CD4-positive, alpha-beta memory T cell (primary cell): ENCODE measurements at regions of chr11 and their contacts with region 1.

Region 1: DNA sequence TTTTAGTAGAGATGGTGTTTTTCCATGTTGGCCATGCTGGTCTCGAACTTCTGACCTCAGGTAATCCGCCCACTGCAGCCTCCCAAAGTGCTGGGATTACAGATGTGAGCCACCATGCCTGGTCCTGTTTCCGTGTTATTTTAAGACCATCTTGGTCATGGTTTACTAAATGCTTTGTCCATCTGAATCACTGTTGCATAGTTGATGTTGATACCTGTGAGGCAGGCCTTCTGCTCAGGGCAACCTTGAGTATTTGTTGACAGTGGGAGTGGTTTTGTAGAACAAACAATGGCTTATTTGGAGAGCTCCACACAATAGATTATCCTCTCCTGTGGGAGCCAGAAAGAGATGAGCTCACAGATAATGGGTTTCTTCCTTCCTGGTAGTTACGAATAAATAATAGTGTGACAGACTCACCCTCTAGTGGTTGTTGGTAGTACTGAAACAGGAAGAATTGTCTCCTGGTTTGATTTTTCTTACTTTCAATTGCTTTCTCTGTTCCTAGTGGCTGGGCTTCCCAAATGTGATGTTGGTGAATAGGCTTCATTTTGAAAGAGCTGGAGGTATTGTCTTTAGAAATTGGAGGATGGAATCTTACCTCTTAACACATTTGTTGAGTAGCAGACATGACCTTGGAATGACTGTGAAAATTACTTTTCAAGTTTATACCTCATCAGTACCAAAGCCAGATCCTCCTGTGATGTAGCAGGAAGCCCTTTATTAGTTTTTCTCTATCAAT is 39.0 kb downstream of the CTNND1 start:
- DNase-seq: peak in 4 of 5 donors; percentile 57 to 65 (median 64)
- H3K4me3 ChIP-seq: no peak overlapping the region
- H3K4me3 Mint-ChIP-seq: peak overlapping the region in 6 of 8 donors; percentile 7 to 69 (median 22)
- H3K27ac ChIP-seq: peak overlapping the region; percentile 24
- H3K27ac Mint-ChIP-seq: peak overlapping the region; percentile 65 to 94 (median 89)
- H3K4me1 ChIP-seq: peaks cover 27% of the 10 kb centered on the region
- H3K4me1 Mint-ChIP-seq: peaks cover 10 to 29% (median 21%) of the 10 kb centered on the region in 4 donors
- H3K27me3 ChIP-seq: no peaks in the 10 kb centered on the region
- H3K27me3 Mint-ChIP-seq: no peaks in the 10 kb centered on the region

Region 2: DNA sequence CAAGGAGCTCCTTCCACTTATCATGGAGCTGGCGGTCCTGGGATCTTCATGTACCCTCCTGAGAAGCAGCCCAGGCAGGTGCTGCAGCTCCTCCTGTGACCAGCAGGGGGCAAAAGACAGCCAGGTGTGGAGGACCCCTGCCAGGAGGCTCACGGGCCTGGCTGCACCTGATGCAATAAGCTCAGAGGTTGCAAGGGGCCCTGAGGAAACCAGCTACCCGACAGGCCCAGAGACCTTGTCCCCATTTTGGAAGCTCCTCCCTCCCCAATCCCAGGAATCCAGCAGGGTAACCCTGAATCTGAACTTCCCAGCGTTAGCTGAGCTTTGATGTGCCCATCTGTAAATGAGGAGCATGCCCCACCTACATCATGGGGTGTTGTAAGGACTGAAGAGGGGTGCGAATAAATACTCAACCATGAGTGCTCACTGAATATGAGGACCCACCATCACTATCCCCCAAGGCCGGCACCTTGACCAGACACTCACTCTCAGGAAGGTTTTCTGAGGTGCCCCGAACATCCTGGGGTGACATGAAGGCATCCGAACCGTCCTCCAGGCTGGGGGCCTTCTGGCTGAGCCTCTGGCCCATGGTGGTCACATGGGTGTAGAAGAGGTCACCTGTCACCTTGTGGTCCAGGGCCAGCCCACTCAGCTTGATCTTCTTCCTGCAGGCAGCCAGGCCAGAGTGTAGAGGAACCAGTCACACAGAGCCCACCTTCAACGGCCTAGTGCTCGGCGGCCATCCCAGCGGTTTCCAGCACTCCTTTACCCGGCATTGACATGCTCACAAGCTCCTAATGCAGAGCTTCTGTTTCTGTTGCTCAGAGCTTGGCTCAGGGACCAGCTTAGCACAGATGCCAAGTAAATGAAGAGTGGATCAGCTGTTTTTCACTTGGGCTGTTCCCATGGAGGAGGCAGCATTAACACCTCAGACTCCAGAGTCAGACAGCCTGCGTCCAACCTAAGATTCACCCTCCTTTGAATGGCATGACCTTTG is 306.8 kb before region 1 on chr11:
- CTCF ChIA-PET with region 1: interaction called, 41 read pairs
- POLR2A ChIA-PET with region 1: no interaction called
- intact Hi-C with region 1: loop called (anchors 1 kb)
- DNase-seq: peak; percentile 64 to 74 (median 67)
- H3K4me3 ChIP-seq: no peak overlapping the region
- H3K4me3 Mint-ChIP-seq: no peak overlapping the region
- H3K27ac ChIP-seq: no peak overlapping the region
- H3K27ac Mint-ChIP-seq: no peak overlapping the region
- H3K4me1 ChIP-seq: no peaks in the 10 kb centered on the region
- H3K4me1 Mint-ChIP-seq: no peaks in the 10 kb centered on the region
- H3K27me3 ChIP-seq: no peaks in the 10 kb centered on the region
- H3K27me3 Mint-ChIP-seq: no peaks in the 10 kb centered on the region

Region 3: DNA sequence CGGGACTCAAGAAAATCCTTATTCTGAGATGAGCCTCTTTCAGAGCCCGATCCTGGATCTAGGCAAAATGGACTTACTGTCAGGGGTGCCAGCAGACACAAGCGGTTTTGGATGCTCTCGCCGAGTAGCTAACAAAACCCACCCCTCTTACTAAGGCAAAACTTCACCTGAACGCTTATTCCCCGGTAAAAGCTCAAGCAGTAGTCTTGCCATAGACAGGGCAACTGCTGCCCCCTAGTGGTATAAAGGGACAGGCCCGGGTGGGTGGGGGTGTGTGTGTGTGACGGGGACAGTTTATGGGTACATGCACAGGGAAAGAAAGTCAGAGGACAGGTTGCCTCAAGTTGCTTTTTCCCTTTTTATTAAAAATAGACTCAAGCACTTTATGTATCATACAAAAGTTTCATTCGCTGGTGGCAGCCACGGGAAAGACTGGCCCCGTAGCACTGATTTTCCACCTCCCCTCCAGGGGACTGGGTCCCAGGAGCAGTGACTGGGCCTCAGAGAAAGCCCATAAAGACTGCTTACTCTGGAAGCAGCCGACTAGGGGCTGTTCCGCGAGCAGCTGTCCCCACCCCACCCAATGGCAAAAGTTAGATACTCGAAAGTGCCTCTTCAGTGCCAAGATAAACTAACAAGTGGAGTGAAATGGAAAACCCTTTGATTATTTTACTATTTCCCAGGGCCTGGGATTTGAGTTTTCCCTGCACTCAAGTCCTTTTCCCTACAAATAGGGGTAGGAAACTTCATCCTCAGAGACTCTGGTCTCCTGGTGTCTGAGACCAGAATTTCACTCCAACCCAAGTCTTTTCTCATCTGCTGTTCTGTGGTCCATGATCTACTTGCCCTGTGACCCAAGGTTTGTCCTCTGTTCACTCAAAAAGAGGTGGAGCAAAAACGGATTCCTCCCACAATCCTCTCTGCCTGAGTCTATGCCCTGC is 155.6 kb before region 1 on chr11:
- CTCF ChIA-PET with region 1: interaction called, 49 read pairs
- POLR2A ChIA-PET with region 1: interaction called, 6 read pairs
- intact Hi-C with region 1: loop called (anchors 1 kb)
- DNase-seq: peak; percentile 82 to 89 (median 86)
- H3K4me3 ChIP-seq: no peak overlapping the region
- H3K4me3 Mint-ChIP-seq: peak overlapping the region in 1 of 8 donors; percentile 67
- H3K27ac ChIP-seq: no peak overlapping the region
- H3K27ac Mint-ChIP-seq: peak overlapping the region in 2 of 7 donors; percentile 62 to 69
- H3K4me1 ChIP-seq: peaks cover 17% of the 10 kb centered on the region
- H3K4me1 Mint-ChIP-seq: peaks cover 18 to 38% (median 28%) of the 10 kb centered on the region in 4 donors
- H3K27me3 ChIP-seq: peaks cover 37% of the 10 kb centered on the region
- H3K27me3 Mint-ChIP-seq: peaks cover 31 to 50% of the 10 kb centered on the region in 2 donors

Region 4: GRCh38 chr11:57667736-57668435 is 132.7 kb before region 1 on chr11 and contains the start of gene ZDHHC5:
- CTCF ChIA-PET with region 1: interaction called, 15 read pairs
- POLR2A ChIA-PET with region 1: interaction called, 5 read pairs
- intact Hi-C with region 1: loop called (anchors 1 kb)
- DNase-seq: peak; percentile 99 to 100 (median 100)
- H3K4me3 ChIP-seq: peak within 1 kb of the TSS; percentile 75 to 93
- H3K4me3 Mint-ChIP-seq: peak within 1 kb of the TSS; percentile 88 to 99 (median 96)
- H3K27ac ChIP-seq: peak within 1 kb of the TSS; percentile 91
- H3K27ac Mint-ChIP-seq: peak within 1 kb of the TSS; percentile 98 to 100 (median 99)
- H3K4me1 ChIP-seq: peaks cover 46% of the 10 kb centered on the region
- H3K4me1 Mint-ChIP-seq: peaks cover 33 to 67% (median 45%) of the 10 kb centered on the region in 4 donors
- H3K27me3 ChIP-seq: no peaks in the 10 kb centered on the region
- H3K27me3 Mint-ChIP-seq: peaks cover 0 to 5% of the 10 kb centered on the region in 2 donors
- total RNA-seq, gene ZDHHC5: 73.2 to 75.8 TPM

Region 5: GRCh38 chr11:57712256-57713150 is 88.1 kb before region 1 on chr11 and contains the start of gene TMX2:
- CTCF ChIA-PET with region 1: interaction called, 30 read pairs
- POLR2A ChIA-PET with region 1: interaction called, 6 read pairs
- intact Hi-C with region 1: loop called (anchors 1 kb)
- DNase-seq: peak; percentile 89 to 97 (median 94)
- H3K4me3 ChIP-seq: peak within 1 kb of the TSS; percentile 92 to 96
- H3K4me3 Mint-ChIP-seq: peak within 1 kb of the TSS; percentile 93 to 99 (median 98)
- H3K27ac ChIP-seq: peak within 1 kb of the TSS; percentile 96
- H3K27ac Mint-ChIP-seq: peak within 1 kb of the TSS; percentile 91 to 99 (median 98)
- H3K4me1 ChIP-seq: peaks cover 34% of the 10 kb centered on the region
- H3K4me1 Mint-ChIP-seq: peaks cover 30 to 64% (median 43%) of the 10 kb centered on the region in 4 donors
- H3K27me3 ChIP-seq: no peaks in the 10 kb centered on the region
- H3K27me3 Mint-ChIP-seq: no peaks in the 10 kb centered on the region
- total RNA-seq, gene TMX2: 63.6 to 67.1 TPM

Region 6: DNA sequence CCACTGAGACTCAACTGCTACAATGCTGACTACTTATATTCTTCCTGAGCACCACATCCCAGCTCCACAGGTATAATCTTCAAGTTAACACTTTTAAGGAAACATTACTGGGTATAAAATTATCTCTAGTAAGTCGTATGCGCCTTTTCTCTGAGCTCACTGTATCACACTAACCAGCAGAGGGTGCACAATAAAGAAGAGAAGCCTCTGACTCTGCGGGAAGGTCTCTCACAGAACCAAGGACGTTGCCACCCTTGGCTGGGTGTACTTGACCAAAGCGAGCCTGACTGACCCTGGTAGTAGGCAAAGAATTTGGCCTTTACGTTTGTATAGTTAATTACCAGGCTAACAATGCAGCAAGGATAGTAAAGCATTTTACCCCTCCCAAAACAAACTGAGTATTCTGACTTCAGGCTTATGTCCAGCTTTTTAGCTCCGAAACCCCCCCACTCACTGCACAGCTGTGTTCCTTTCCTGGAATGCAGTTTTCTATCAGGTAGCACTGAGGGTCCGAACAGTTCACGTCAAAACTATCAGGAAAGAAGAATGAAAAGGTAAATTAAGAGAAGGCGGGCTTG is 48.8 kb before region 1 on chr11 and contains the start of gene BTBD18:
- CTCF ChIA-PET with region 1: interaction called, 143 read pairs
- POLR2A ChIA-PET with region 1: interaction called, 14 read pairs
- intact Hi-C with region 1: loop called (anchors 1 kb)
- DNase-seq: peak in 2 of 5 donors; percentile 1 to 15
- H3K4me3 ChIP-seq: no peak within 1 kb of the TSS
- H3K4me3 Mint-ChIP-seq: no peak within 1 kb of the TSS
- H3K27ac ChIP-seq: no peak within 1 kb of the TSS
- H3K27ac Mint-ChIP-seq: peak within 1 kb of the TSS in 2 of 7 donors; percentile 19 to 80
- H3K4me1 ChIP-seq: no peaks in the 10 kb centered on the region
- H3K4me1 Mint-ChIP-seq: peaks cover 0 to 10% (median 8%) of the 10 kb centered on the region in 4 donors
- H3K27me3 ChIP-seq: no peaks in the 10 kb centered on the region
- H3K27me3 Mint-ChIP-seq: no peaks in the 10 kb centered on the region
- total RNA-seq, gene BTBD18: not detected

Region 7: DNA sequence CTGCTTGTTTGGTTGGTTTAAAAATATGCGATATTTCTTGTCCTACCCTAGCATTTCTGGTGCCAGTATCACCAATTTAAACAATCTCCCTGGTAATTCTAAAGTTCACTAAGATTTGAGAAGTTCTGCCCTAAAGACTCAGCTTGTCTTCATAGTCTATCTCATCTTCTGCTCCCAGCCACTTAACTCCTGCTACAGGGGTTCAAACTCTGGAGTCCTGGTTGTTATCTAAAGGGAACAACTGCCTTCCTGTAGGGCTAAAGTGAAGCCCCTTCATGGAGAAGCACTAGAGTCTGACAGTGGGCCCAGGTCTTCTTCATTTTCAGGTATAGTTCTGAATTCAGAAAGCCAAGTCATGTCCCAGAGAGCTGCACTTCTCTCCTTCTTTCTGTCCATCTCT is 34.2 kb after region 1 on chr11:
- CTCF ChIA-PET with region 1: no interaction called
- POLR2A ChIA-PET with region 1: no interaction called
- intact Hi-C with region 1: no loop called
- DNase-seq: no peak
- H3K4me3 ChIP-seq: no peak overlapping the region
- H3K4me3 Mint-ChIP-seq: no peak overlapping the region
- H3K27ac ChIP-seq: no peak overlapping the region
- H3K27ac Mint-ChIP-seq: no peak overlapping the region
- H3K4me1 ChIP-seq: no peaks in the 10 kb centered on the region
- H3K4me1 Mint-ChIP-seq: no peaks in the 10 kb centered on the region
- H3K27me3 ChIP-seq: peaks cover 9% of the 10 kb centered on the region
- H3K27me3 Mint-ChIP-seq: peaks cover 21 to 27% of the 10 kb centered on the region in 2 donors

Region 8: DNA sequence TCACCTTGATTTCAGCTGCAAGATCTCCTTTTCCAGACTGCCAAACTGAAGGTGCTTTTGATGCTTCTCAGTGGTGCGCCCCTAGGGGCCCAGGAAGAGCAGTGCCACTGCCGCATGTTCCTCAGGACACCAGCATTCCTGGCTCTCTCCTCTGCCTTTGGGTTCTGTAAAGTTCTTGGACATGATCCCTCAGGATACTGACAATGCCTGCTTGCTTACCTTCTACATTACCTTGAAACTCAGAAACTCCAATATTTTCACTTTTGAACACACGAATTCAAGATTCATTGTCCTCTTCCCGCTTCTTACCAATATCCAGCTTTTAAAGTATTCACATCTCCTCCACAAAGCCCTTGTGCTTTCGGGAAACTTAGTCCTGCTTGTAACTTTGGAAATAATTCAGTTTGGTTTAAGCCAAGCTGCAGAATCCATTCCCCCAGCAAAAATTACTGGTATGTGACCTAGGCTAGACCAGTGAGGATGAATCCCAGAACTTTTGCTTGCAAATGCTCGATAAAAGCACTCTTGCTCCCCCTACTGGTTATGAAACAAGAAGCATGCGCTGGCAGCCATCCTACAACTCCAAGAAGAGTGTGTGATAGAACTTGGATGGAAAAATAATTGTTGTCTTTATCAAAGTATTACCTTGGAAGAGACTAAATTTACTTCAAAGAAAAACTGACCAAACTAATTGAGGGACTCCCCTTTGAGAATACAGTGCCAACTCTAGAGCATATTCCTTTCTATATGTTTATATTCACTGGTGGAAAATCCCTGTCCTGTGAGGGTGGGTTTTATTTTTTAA is 723.8 kb after region 1 on chr11:
- CTCF ChIA-PET with region 1: interaction called, 4 read pairs
- POLR2A ChIA-PET with region 1: interaction called, 4 read pairs
- intact Hi-C with region 1: loop called (anchors 1 kb)
- DNase-seq: peak; percentile 57 to 66 (median 63)
- H3K4me3 ChIP-seq: peak overlapping the region in 1 of 2 donors; percentile 22
- H3K4me3 Mint-ChIP-seq: peak overlapping the region; percentile 68 to 85 (median 76)
- H3K27ac ChIP-seq: peak overlapping the region; percentile 55
- H3K27ac Mint-ChIP-seq: peak overlapping the region; percentile 77 to 97 (median 94)
- H3K4me1 ChIP-seq: peaks cover 35% of the 10 kb centered on the region
- H3K4me1 Mint-ChIP-seq: peaks cover 31 to 54% (median 40%) of the 10 kb centered on the region in 4 donors
- H3K27me3 ChIP-seq: no peaks in the 10 kb centered on the region
- H3K27me3 Mint-ChIP-seq: no peaks in the 10 kb centered on the region